PC-9 (cell line): ENCODE measurements at regions of chr11 and their contacts with region 1.

Region 1: GRCh38 chr11:62612366-62613290 is at the starts of genes EML3 and ROM1:
- DNase-seq: peak; percentile 79 to 93
- H3K4me3 ChIP-seq: peak within 1 kb of the TSS; percentile 85
- H3K27ac ChIP-seq: peak within 1 kb of the TSS; percentile 66
- H3K4me1 ChIP-seq: peaks cover 35% of the 10 kb centered on the region
- H3K27me3 ChIP-seq: no peaks in the 10 kb centered on the region
- CTCF ChIP-seq: peak; percentile 87
- total RNA-seq, gene EML3: 83.2 and 84.2 TPM in 2 replicates
- total RNA-seq, gene ROM1: 6.2 and 7.0 TPM in 2 replicates

Region 2: DNA sequence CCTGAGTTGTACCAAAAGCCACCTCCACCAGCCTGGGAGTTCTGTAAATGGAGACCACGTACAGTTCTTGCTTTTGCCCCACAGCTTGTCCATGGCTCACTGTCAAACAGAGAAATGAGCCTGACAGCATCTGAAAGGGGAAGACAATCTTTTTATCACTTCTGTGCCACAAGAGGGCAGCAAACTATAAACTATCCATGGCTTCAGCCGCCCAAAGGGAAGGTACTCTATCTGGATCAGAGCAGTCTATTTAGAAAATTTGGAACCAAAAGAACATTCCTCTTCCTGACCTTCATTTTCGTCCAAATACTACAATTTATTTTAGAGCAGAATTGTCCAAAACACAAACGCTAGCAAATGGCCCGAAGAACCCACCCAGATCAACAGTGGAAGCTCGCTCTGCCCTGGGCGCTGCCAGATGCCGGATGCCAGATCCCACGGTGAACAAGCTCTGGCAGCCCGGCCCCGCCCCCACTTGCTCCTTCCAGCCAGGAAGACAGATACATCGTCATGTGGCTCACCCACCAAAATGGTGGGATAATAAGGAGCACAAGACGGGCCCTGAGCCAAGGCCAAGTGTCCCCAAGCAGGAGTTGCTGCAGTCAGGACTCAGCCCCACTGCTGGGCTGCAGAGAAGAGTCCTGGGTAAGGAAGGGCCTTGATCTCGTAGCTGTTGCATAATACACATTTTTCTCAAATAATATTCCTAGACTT is 217.6 kb before region 1 on chr11:
- CTCF ChIA-PET with region 1: interaction called, 4 read pairs
- POLR2A ChIA-PET with region 1: no interaction called
- intact Hi-C with region 1: loop called (anchors 5 kb)
- DNase-seq: peak; percentile 71 to 75
- H3K4me3 ChIP-seq: no peak overlapping the region
- H3K27ac ChIP-seq: no peak overlapping the region
- H3K4me1 ChIP-seq: peaks cover 27% of the 10 kb centered on the region
- H3K27me3 ChIP-seq: no peaks in the 10 kb centered on the region
- CTCF ChIP-seq: peak; percentile 91

Region 3: GRCh38 chr11:62591448-62592145 is 21.0 kb before region 1 on chr11 and contains the start of gene TUT1:
- CTCF ChIA-PET with region 1: no interaction called
- POLR2A ChIA-PET with region 1: interaction called, 7 read pairs
- intact Hi-C with region 1: loop called (anchors 1 kb)
- DNase-seq: peak; percentile 98 to 100
- H3K4me3 ChIP-seq: peak within 1 kb of the TSS; percentile 84
- H3K27ac ChIP-seq: peak within 1 kb of the TSS; percentile 61
- H3K4me1 ChIP-seq: peaks cover 29% of the 10 kb centered on the region
- H3K27me3 ChIP-seq: no peaks in the 10 kb centered on the region
- CTCF ChIP-seq: no peak
- total RNA-seq, gene TUT1: 39.3 and 40.5 TPM in 2 replicates

Region 4: DNA sequence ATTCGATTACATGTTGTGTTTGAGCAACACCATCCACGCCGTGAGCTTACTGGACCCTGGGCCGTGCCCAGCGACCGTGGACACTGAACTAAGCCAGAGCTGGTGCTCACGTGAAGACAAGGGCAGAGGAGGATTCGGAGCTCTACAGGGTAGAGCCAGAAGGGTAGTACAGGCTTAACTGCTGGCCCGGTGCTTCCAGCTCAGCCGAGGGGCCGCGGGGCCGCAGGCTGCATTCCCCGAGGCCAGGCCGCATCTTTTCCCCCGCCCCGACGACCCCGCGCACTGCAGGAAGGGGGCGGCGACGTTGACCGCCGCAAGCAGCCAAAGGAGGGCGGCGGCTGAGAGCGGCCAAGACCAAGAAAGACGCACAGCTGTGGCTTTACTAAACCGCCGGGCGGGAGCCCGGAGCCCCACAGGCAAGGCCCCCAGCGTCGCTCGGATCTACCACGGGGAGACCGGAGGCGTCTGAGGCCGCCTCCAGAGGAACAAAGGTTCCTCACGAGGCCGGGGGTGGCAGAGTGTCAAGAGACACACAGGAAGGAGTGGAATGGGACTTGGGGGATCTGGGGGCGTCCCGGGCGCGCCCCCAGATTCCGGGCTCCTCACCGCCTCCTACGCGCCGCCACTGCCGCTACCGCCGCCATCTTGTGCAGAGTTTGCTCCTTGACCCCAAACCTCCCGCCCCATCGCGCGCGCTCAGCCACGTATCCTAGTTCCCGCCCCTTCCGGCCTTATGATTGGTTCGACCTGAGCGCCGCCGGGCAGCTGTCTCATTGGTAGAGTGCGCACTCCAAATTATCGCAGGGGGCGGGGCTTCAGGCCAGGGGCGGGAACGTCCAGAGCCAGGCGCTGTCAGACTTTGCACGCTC is 33.6 kb after region 1 on chr11 and contains the start of gene GANAB:
- CTCF ChIA-PET with region 1: no interaction called
- POLR2A ChIA-PET with region 1: no interaction called
- intact Hi-C with region 1: loop called (anchors 5 kb)
- DNase-seq: peak; percentile 95 to 98
- H3K4me3 ChIP-seq: peak within 1 kb of the TSS; percentile 99
- H3K27ac ChIP-seq: peak within 1 kb of the TSS; percentile 48
- H3K4me1 ChIP-seq: peaks cover 15% of the 10 kb centered on the region; the same call in 1 of the 2 replicates
- H3K27me3 ChIP-seq: no peaks in the 10 kb centered on the region
- CTCF ChIP-seq: no peak
- total RNA-seq, gene GANAB: 478 and 525 TPM in 2 replicates

Region 5: GRCh38 chr11:62855571-62856332 is 243.1 kb after region 1 on chr11:
- CTCF ChIA-PET with region 1: no interaction called
- POLR2A ChIA-PET with region 1: interaction called, 15 read pairs
- intact Hi-C with region 1: no loop called
- DNase-seq: peak; percentile 98 to 99
- H3K4me3 ChIP-seq: peak overlapping the region; percentile 97
- H3K27ac ChIP-seq: peak overlapping the region; percentile 85
- H3K4me1 ChIP-seq: peaks cover 37% of the 10 kb centered on the region
- H3K27me3 ChIP-seq: no peaks in the 10 kb centered on the region
- CTCF ChIP-seq: no peak